ENCODE measurements at regions of chr11 and their contacts with region 1.

Region 1: DNA sequence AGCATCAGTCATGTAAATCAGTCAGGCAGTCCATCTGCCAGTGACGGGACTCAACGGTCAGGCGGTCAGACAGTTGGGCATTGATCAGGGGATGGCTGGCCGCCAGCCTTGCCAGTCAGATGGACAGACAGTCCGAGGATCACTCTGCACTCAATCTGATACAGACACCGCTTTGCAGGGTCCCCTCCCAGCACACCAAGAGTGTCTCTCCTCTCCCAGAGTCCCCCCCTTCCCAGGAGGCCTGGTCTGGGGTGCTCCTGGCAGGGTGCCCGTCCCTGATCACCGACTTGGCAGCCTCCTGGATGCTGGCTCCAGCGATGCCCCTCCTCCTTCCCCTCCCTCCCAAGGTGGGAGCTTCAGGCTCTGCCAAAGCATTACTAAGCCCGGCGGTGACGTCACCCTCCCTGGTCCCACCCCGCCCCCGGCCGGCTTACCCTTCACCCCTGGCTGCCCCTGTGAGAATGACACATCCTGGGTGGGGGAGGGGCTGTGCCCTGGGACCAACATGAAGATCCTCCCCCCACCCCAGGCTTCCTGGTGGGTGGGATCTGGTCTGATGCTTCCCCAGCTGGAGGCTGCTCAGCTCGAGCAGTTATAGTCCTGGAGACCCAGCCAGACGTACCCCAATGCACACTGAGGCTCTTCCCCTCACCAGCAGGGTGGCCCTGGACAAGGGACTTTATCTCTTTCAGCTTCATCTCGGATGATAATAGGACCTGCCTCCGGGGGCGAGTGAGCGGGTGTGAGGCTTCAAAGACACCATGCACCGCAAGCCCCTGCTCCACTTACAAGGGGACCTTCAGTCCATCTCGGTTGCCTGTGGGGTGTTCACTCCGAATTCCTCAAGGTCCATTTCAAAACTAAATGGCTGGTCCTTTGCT is 69.2 kb downstream of the CD82 start:
- DNase-seq: peak in 1 of 2 donors; percentile 26
- ATAC-seq: no peak
- H3K4me3 ChIP-seq: no peak overlapping the region
- H3K27ac ChIP-seq: no peak overlapping the region
- H3K4me1 ChIP-seq: peaks cover 12 to 13% of the 10 kb centered on the region in 2 donors
- H3K27me3 ChIP-seq: no peaks in the 10 kb centered on the region
- CTCF ChIP-seq: no peak
- POLR2A ChIP-seq: no peak

Region 2: DNA sequence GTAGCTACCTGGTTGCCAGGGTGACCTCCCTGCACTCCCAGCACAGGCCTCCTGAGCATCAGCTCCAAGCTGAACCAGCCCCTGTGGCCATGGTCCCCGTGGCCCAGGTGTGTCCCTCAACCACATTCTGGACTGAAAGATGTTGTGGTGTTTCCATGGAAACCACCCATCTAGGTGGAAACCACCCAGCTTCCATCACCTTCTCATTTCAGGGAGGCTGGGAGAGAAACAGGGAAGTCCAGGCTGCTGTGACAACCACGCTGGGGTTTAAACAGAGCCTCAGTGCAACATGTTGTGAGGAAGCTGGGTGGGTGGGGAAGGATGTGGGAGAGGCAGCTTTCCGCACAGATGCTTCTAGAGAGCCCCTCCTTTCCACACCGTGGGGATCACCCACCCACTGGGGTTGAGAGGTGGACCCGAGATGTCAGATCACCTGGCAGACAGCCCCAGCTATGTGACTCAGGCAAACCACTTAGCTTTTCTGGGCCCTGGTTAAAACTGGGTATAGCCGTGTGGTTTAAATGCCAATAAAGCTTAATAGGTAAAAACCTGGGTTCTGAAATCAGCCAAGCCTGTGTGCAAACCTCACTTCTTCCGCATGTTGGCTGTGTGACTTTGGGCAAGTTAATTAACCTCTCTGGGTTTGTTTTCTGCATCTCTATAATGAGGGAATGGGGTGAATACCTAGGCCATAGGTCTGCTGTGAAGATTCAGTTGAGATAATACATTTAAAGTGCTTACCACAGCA is 22.8 kb before region 1 on chr11:
- in situ Hi-C with region 1: no loop called
- intact Hi-C with region 1: no loop called
- DNase-seq: no peak
- ATAC-seq: no peak
- H3K4me3 ChIP-seq: no peak overlapping the region
- H3K27ac ChIP-seq: no peak overlapping the region
- H3K4me1 ChIP-seq: peaks cover 7 to 19% of the 10 kb centered on the region in 2 donors
- H3K27me3 ChIP-seq: no peaks in the 10 kb centered on the region
- CTCF ChIP-seq: no peak
- POLR2A ChIP-seq: no peak

Region 3: DNA sequence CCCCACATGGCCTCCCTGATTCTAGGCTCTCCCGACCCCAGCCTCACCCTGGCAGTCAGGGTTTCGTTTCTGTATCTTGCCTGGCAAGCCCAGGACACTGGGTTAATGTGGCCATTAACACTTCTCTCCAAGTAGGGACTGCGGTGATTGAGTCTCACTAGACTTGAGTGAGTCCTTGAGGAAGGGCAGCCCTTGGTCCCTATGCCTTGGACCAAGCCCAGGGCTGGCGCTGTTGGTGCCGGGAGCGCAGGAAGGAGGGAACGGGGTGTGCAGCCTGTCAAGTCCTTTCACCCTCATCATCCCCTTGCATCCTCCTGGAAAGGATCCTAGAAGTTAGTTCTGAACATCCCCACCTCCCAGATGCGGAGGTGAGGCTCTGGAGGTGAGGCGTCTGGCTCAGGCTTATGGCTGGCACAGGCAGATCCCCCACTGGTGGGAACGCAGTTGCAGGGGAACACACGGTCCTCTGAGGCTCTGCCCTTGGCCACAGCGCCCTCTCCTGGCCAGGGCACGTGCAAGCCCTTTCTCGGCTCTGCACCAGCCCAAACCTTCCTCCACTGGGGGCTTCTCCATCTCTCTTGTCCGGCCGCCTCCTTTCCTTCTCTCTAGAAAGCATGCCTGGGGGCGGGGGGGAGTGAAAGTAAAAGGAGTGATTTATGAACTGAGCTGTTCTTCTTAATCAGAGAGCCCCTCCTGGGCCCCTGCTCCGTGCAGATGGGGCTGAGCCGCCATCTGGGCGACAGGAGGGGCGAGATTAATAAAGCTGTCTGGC is 259.4 kb after region 1 on chr11:
- in situ Hi-C with region 1: loop called in 1 of 4 experiments (anchors 10 kb)
- intact Hi-C with region 1: no loop called
- DNase-seq: no peak
- ATAC-seq: peak; percentile 51 to 59
- H3K4me3 ChIP-seq: no peak overlapping the region
- H3K27ac ChIP-seq: peak overlapping the region in 1 of 4 donors; percentile 40
- H3K4me1 ChIP-seq: peaks cover 0 to 12% of the 10 kb centered on the region in 2 donors
- H3K27me3 ChIP-seq: no peaks in the 10 kb centered on the region
- CTCF ChIP-seq: peak; percentile 34 to 81 (median 74)
- POLR2A ChIP-seq: no peak